ENCODE measurements at regions of chr7 and their contacts with region 1.

Region 1: GRCh38 chr7:94748371-94748770 is 92.4 kb upstream of the SGCE start:
- DNase-seq: no peak
- H3K4me3 Mint-ChIP-seq: no peak overlapping the region
- H3K27ac Mint-ChIP-seq: peak overlapping the region; percentile 44
- H3K4me1 Mint-ChIP-seq: peaks cover 13% of the 10 kb centered on the region
- H3K27me3 Mint-ChIP-seq: no peaks in the 10 kb centered on the region
- CTCF ChIP-seq: no peak

Region 2: GRCh38 chr7:94697035-94697974 is 51.1 kb before region 1 on chr7:
- CTCF ChIA-PET with region 1: no interaction called
- intact Hi-C with region 1: loop called (anchors 5 kb)
- DNase-seq: peak; percentile 48
- H3K4me3 Mint-ChIP-seq: no peak overlapping the region
- H3K27ac Mint-ChIP-seq: no peak overlapping the region
- H3K4me1 Mint-ChIP-seq: peaks cover 13% of the 10 kb centered on the region
- H3K27me3 Mint-ChIP-seq: no peaks in the 10 kb centered on the region
- CTCF ChIP-seq: no peak